ENCODE measurements at regions of chr3 and their contacts with region 1.

Region 1: DNA sequence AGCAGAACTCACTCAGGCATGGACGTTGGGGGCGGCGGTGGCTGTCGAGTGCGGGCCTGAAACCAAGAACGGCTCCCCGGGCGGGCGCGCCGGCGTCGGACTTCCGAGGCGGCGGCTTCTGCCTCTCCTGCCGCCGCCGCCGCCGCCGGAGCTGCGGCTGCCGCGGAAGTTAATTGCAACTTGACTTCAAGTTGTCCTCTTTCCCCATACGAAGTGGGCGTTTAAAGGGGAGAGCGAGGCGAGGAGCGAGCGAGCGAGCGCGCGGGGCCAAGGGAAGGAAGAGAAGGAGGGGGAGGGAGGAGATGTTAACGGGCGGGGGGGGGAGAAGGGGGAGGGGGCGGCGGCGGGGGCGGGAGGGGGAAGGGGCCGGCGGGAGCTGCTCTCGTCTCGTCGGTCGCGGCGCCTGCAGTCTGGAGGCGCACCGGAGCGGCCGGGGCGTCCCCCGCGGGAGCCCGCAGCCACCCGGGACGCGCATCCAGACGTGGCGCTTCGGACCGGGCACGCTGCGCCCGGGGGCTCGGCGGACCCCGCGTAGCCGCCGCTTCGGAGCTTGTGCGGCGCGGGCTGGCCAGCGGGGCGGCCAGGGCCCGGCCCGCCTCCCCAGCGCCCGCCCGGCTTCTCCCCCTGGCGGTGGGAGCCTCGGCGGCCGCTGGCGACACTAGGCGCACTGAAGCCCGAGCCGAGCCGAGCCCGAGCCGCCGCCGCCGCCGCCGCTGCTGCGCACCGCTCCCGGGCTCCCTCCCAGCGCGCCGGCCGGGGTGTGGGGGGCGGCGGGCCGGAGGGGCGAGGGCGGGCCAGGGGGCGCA is 19.7 kb upstream of the SATB1 start:
- DNase-seq: peak; percentile 82
- ATAC-seq: peak; percentile 81
- H3K4me3 Mint-ChIP-seq: peak overlapping the region; percentile 93
- H3K27ac Mint-ChIP-seq: peak overlapping the region; percentile 91
- H3K4me1 Mint-ChIP-seq: peaks cover 55% of the 10 kb centered on the region
- H3K27me3 Mint-ChIP-seq: peaks cover 5% of the 10 kb centered on the region
- CTCF ChIP-seq: no peak

Region 2: DNA sequence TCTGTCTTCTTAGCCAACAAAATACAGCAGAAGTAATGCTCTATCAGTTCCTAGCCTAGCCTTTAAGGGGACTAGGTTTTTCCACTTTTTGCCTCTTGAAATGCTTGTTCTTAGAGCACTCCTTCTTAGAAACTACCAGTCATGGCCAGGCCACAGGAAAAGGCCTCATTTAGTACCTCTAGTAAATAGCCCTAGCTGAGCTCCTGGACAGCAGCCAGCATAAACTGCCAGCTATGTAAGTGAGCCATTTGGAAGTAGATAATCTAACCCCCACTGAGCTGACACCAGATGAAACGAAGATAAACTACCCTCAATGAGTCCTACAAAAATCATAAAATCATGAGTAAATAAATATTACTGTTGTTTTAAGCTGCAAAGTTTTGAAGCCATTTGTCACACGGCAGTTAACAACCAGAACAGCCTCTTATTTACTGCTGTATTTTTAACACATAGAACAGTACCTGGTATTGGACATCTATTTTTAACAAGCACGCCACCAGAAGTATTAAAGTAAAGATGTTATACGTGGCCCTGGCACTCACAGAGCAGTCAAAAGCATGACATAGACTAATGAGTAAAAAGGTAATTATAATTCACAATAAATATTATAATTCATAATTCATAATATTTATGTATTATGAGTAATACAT is 714.4 kb before region 1 on chr3:
- CTCF ChIA-PET with region 1: no interaction called
- POLR2A ChIA-PET with region 1: no interaction called
- intact Hi-C with region 1: no loop called
- DNase-seq: no peak
- ATAC-seq: no peak
- H3K4me3 Mint-ChIP-seq: no peak overlapping the region
- H3K27ac Mint-ChIP-seq: no peak overlapping the region
- H3K4me1 Mint-ChIP-seq: peaks cover 33% of the 10 kb centered on the region
- H3K27me3 Mint-ChIP-seq: no peaks in the 10 kb centered on the region
- CTCF ChIP-seq: no peak

Region 3: GRCh38 chr3:18389108-18389733 is 55.6 kb before region 1 on chr3:
- CTCF ChIA-PET with region 1: interaction called, 5 read pairs
- POLR2A ChIA-PET with region 1: no interaction called
- intact Hi-C with region 1: loop called (anchors 2 kb)
- DNase-seq: no peak
- ATAC-seq: no peak
- H3K4me3 Mint-ChIP-seq: no peak overlapping the region
- H3K27ac Mint-ChIP-seq: no peak overlapping the region
- H3K4me1 Mint-ChIP-seq: no peaks in the 10 kb centered on the region
- H3K27me3 Mint-ChIP-seq: no peaks in the 10 kb centered on the region
- CTCF ChIP-seq: peak; percentile 10

Region 4: DNA sequence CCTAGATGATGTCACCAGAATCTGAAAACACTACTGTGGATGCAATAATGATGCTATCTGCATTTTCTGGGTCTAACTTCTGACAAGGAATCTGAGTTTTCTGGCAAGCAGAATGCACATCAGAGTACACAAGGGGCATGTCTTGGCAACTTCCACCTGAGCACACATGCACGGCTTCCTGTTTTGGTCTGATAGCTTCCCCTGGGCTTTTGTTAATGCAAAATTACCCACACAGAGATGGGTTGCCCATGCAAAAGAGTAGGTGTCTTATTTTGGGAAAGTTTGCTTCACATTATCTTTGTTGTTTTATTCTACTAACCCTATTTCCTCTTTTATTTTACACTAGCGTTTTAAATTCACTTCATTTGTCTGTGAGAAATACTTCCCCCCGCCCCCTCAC is 54.5 kb after region 1 on chr3:
- CTCF ChIA-PET with region 1: interaction called, 3 read pairs
- POLR2A ChIA-PET with region 1: no interaction called
- intact Hi-C with region 1: loop called (anchors 2 kb)
- DNase-seq: no peak
- ATAC-seq: peak; percentile 97
- H3K4me3 Mint-ChIP-seq: peak overlapping the region; percentile 29
- H3K27ac Mint-ChIP-seq: peak overlapping the region; percentile 57
- H3K4me1 Mint-ChIP-seq: peaks cover 43% of the 10 kb centered on the region
- H3K27me3 Mint-ChIP-seq: no peaks in the 10 kb centered on the region
- CTCF ChIP-seq: no peak

Region 5: DNA sequence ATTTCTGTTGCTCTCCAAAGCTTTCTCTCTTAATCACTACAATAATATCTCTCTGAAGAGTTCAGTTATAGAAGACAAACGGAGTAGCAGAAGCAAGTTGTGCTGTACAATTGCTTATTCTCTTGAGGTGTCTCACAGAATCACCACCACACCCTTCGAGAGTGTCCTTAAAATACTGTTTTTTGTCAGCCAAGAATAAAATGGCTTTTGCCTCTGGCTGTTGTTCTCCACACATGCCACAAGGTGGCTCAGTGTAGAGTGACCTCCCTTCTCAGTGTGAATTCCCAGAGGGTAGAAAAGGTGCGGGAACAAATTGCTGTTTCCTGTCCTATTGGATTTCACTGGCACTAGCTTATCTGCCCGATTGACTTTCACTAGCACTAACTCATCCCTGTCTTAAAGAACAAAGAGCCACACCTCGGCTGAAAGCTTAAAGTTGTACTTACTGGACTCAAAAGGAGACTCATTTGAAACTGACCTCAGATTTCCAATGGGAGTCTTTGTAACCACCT is 114.6 kb after region 1 on chr3:
- CTCF ChIA-PET with region 1: interaction called, 3 read pairs
- POLR2A ChIA-PET with region 1: interaction called, 3 read pairs
- intact Hi-C with region 1: loop called (anchors 2 kb)
- DNase-seq: no peak
- ATAC-seq: peak; percentile 65
- H3K4me3 Mint-ChIP-seq: no peak overlapping the region
- H3K27ac Mint-ChIP-seq: no peak overlapping the region
- H3K4me1 Mint-ChIP-seq: peaks cover 27% of the 10 kb centered on the region
- H3K27me3 Mint-ChIP-seq: no peaks in the 10 kb centered on the region
- CTCF ChIP-seq: no peak

Region 6: DNA sequence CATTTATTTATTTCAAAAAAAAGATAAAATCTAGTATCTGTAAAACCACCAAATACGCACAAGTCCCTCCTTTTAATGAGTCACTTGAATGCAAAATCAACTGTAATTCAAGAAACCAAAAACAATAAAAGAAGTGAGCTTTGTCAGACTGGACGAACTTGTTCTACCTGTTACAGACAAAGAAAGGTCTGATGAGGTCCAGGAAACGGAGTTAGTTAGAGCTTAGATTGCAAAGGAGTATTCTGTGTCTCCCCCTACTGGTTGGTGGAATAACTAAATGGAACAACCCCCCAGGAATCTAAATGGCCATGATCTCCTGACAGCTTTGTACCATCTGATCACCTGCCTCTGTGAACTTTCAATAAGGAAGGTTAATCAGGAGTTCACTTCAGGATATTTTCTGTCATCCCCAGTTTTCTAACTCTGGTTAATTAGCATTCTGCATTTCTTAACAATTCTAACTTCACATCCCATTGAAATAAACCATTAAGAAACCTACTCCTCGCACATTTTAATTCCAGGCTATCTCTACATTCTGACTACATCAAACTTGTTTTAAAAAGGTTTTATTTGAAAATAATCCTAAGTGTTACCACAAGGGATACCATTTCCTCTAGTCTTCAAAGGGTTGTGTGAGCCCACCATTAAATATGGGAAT is 313.4 kb after region 1 on chr3:
- CTCF ChIA-PET with region 1: interaction called, 7 read pairs
- POLR2A ChIA-PET with region 1: no interaction called
- intact Hi-C with region 1: loop called (anchors 1 kb)
- DNase-seq: no peak
- ATAC-seq: peak; percentile 78
- H3K4me3 Mint-ChIP-seq: no peak overlapping the region
- H3K27ac Mint-ChIP-seq: no peak overlapping the region
- H3K4me1 Mint-ChIP-seq: no peaks in the 10 kb centered on the region
- H3K27me3 Mint-ChIP-seq: no peaks in the 10 kb centered on the region
- CTCF ChIP-seq: peak; percentile 27

Measured in activated B cell treated with CpG ODN at 0.5 μM for 24 hours (primary cell).